GM12878 (cell line): ENCODE measurements at regions of chr5 and their contacts with region 1.

Region 1: DNA sequence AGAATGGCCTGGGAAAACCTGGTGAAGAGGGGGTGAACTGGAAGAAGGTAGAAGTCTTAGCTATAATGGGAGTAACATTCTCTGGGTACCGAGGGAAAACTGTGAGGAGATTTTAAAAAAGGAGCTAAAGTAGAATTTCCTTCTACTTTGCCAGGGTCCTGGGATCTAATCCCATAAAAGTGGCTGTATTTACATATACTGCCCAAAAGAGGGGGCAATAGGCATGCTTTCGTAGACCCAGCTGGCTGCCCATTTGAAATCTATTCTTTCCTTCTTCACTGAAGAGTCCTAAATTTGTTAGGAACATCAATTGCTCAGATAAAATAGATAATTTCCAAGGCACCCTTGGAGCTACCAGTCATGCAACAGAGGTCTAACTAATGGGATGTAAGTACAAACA is 159.2 kb downstream of the CDC42SE2 start:
- DNase-seq: no peak
- ATAC-seq: no peak; the same call in 2 of the 3 replicates
- H3K4me3 ChIP-seq: no peak overlapping the region
- H3K27ac ChIP-seq: no peak overlapping the region
- H3K4me1 ChIP-seq: 0 out of 2 replicates have a peak, but pooled peaks cover 2% of the 10 kb centered on the region
- H3K27me3 ChIP-seq: no peaks in the 10 kb centered on the region
- CTCF ChIP-seq: peak; percentile 19 to 55 (median 41); a peak in 3 of 6 replicates
- EP300 ChIP-seq: no peak
- POLR2A ChIP-seq: no peak
- RAD21 ChIP-seq: peak; percentile 40; the same call in 1 of the 2 replicates

Region 2: GRCh38 chr5:131186561-131187256 is 236.3 kb before region 1 on chr5:
- CTCF ChIA-PET with region 1: no interaction called
- POLR2A ChIA-PET with region 1: no interaction called
- RAD21 ChIA-PET with region 1: no interaction called
- SMC1A ChIA-PET with region 1: no interaction called
- in situ Hi-C with region 1: no loop called
- intact Hi-C with region 1: no loop called
- DNase-seq: no peak
- ATAC-seq: no peak
- H3K4me3 ChIP-seq: no peak overlapping the region
- H3K27ac ChIP-seq: no peak overlapping the region
- H3K4me1 ChIP-seq: no peaks in the 10 kb centered on the region
- H3K27me3 ChIP-seq: no peaks in the 10 kb centered on the region
- CTCF ChIP-seq: no peak
- EP300 ChIP-seq: no peak
- POLR2A ChIP-seq: no peak
- RAD21 ChIP-seq: no peak

Region 3: DNA sequence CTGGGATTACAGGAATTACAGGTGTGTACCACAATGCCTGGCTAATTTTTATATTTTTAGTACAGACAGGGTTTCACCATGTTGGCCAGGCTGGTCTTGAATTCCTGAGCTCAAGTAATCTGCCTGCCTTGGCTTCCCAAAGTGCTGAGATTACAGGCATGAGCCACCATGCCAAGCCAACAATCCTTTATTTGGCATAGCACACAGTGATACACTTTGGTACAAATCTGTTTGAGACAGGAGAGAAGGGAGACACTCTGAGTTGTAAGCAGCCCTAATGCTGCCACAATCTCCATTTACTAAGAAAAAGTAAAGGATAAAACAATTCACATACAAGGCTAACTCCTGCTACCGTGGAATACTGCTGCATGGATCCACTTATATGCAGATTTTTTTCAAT is 34.1 kb after region 1 on chr5:
- CTCF ChIA-PET with region 1: no interaction called
- POLR2A ChIA-PET with region 1: no interaction called
- RAD21 ChIA-PET with region 1: no interaction called
- SMC1A ChIA-PET with region 1: no interaction called
- in situ Hi-C with region 1: no loop called
- intact Hi-C with region 1: no loop called
- DNase-seq: no peak
- ATAC-seq: no peak
- H3K4me3 ChIP-seq: no peak overlapping the region
- H3K27ac ChIP-seq: no peak overlapping the region
- H3K4me1 ChIP-seq: no peaks in the 10 kb centered on the region
- H3K27me3 ChIP-seq: no peaks in the 10 kb centered on the region
- CTCF ChIP-seq: no peak
- EP300 ChIP-seq: no peak
- POLR2A ChIP-seq: no peak
- RAD21 ChIP-seq: no peak

Region 4: GRCh38 chr5:131628990-131629389 is 205.9 kb after region 1 on chr5:
- CTCF ChIA-PET with region 1: interaction called, 10 read pairs
- POLR2A ChIA-PET with region 1: interaction called, 4 read pairs
- RAD21 ChIA-PET with region 1: no interaction called
- SMC1A ChIA-PET with region 1: no interaction called
- in situ Hi-C with region 1: no loop called
- intact Hi-C with region 1: no loop called
- DNase-seq: no peak
- ATAC-seq: no peak
- H3K4me3 ChIP-seq: peak overlapping the region; percentile 37; the same call in 1 of the 2 replicates
- H3K27ac ChIP-seq: no peak overlapping the region; the same call in 1 of the 2 replicates
- H3K4me1 ChIP-seq: peaks cover 5% of the 10 kb centered on the region
- H3K27me3 ChIP-seq: no peaks in the 10 kb centered on the region
- CTCF ChIP-seq: no peak
- EP300 ChIP-seq: no peak
- POLR2A ChIP-seq: no peak
- RAD21 ChIP-seq: no peak